Activated CD4-positive, alpha-beta memory T cell treated with anti-CD3 and anti-CD28 coated beads for 36 hours (primary cell): ENCODE measurements at regions of chr10 and their contacts with region 1.

Region 1: GRCh38 chr10:69123747-69124562 is at the start of gene VPS26A:
- DNase-seq: peak; percentile 99
- H3K4me3 Mint-ChIP-seq: peak within 1 kb of the TSS; percentile 88
- H3K27ac Mint-ChIP-seq: peak within 1 kb of the TSS; percentile 92
- H3K4me1 Mint-ChIP-seq: peaks cover 25% of the 10 kb centered on the region
- H3K27me3 Mint-ChIP-seq: no peaks in the 10 kb centered on the region
- total RNA-seq, gene VPS26A: 44.6 to 51.4 TPM

Region 2: GRCh38 chr10:68997211-68997610 is 126.7 kb before region 1 on chr10:
- CTCF ChIA-PET with region 1: no interaction called
- POLR2A ChIA-PET with region 1: no interaction called
- intact Hi-C with region 1: loop called (anchors 2 kb)
- DNase-seq: peak; percentile 33
- H3K4me3 Mint-ChIP-seq: peak overlapping the region; percentile 40
- H3K27ac Mint-ChIP-seq: peak overlapping the region; percentile 94
- H3K4me1 Mint-ChIP-seq: peaks cover 52% of the 10 kb centered on the region
- H3K27me3 Mint-ChIP-seq: no peaks in the 10 kb centered on the region

Region 3: GRCh38 chr10:69092959-69093850 is 30.8 kb before region 1 on chr10:
- CTCF ChIA-PET with region 1: interaction called, 30 read pairs
- POLR2A ChIA-PET with region 1: interaction called, 7 read pairs
- intact Hi-C with region 1: loop called (anchors 1 kb)
- DNase-seq: peak; percentile 86
- H3K4me3 Mint-ChIP-seq: peak overlapping the region; percentile 59
- H3K27ac Mint-ChIP-seq: peak overlapping the region; percentile 84
- H3K4me1 Mint-ChIP-seq: peaks cover 54% of the 10 kb centered on the region
- H3K27me3 Mint-ChIP-seq: no peaks in the 10 kb centered on the region

Region 4: GRCh38 chr10:69215405-69216176 is 91.6 kb after region 1 on chr10:
- CTCF ChIA-PET with region 1: no interaction called
- POLR2A ChIA-PET with region 1: interaction called, 3 read pairs
- intact Hi-C with region 1: loop called (anchors 2 kb)
- DNase-seq: peak; percentile 73
- H3K4me3 Mint-ChIP-seq: peak overlapping the region; percentile 68
- H3K27ac Mint-ChIP-seq: peak overlapping the region; percentile 84
- H3K4me1 Mint-ChIP-seq: peaks cover 35% of the 10 kb centered on the region
- H3K27me3 Mint-ChIP-seq: no peaks in the 10 kb centered on the region

Region 5: DNA sequence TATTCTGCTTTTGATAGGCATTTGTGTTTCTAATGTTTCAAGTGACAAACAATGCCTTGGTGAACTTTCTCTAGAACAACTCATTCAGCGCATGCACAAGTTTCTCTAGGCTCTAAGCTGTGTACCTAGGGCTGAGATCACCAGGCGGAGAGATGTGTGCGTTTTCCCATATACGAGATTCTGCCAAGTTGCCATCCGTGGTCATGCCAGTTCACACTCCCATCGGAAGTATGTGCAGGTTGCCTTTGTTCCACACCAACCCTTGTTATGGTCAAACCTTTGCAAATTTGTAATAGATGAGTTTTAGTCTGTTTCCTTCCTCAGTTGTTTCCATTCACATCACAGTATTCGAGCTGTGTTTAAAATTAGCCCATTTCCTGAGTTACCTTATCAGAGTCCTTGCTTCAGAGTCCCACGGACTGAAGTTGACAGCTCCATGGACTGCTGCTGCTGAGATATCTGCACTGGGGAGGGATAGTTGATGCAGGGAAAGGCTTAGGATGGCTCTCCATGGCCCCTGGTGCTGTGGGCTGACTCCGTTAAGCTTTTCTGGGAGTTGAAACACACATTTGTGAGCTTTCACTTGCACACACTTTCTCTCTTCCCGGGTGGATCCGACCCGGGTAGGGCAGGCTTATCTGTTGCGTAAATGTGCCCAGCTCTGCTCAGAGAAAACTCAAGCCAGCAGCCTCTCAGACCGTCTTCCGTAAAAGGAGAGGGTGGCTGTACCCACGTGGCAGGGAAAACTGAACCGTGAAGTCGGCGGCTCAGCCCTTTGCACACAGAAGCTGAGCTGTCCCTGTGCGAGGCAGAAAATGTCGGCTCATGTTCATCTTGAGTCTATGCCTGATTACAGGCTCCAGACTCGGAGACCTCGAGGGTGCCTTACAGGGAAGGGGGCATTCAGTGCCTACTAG is 203.8 kb after region 1 on chr10:
- CTCF ChIA-PET with region 1: no interaction called
- POLR2A ChIA-PET with region 1: no interaction called
- intact Hi-C with region 1: no loop called
- DNase-seq: peak; percentile 62
- H3K4me3 Mint-ChIP-seq: peak overlapping the region; percentile 63
- H3K27ac Mint-ChIP-seq: peak overlapping the region; percentile 80
- H3K4me1 Mint-ChIP-seq: peaks cover 62% of the 10 kb centered on the region
- H3K27me3 Mint-ChIP-seq: no peaks in the 10 kb centered on the region